ENCODE measurements at regions of chr2 and their contacts with region 1.

Region 1: GRCh38 chr2:217510771-217511291 is 492.0 kb downstream of the TNS1 start:
- DNase-seq: peak; percentile 58
- ATAC-seq: peak; percentile 93
- H3K4me3 Mint-ChIP-seq: peak overlapping the region; percentile 57
- H3K27ac Mint-ChIP-seq: no peak overlapping the region
- H3K4me1 Mint-ChIP-seq: peaks cover 15% of the 10 kb centered on the region
- H3K27me3 Mint-ChIP-seq: peaks cover 3% of the 10 kb centered on the region
- CTCF ChIP-seq: peak; percentile 55

Region 2: DNA sequence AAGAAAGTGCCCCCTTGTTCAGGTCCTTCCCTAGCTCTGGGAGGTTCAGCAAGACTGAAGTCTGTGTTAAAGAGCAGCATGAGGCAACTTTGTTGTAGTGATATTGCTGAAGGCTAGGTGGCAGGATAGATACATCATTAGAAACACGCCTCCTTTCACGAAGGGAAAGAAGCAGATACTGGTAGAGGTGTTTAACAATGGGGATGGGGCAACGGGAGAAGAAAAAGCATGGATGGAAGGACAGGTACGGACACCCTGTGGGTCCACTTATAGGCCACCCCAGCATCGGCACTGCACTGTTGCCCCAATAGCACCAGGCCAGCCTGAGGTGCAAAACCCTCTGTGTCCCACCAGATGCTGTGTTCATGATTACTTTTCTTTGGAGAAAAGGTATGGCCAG is 811.9 kb before region 1 on chr2:
- CTCF ChIA-PET with region 1: interaction called, 16 read pairs
- POLR2A ChIA-PET with region 1: interaction called, 8 read pairs
- DNase-seq: no peak
- ATAC-seq: peak; percentile 43
- H3K4me3 Mint-ChIP-seq: no peak overlapping the region
- H3K27ac Mint-ChIP-seq: no peak overlapping the region
- H3K4me1 Mint-ChIP-seq: peaks cover 21% of the 10 kb centered on the region
- H3K27me3 Mint-ChIP-seq: peaks cover 23% of the 10 kb centered on the region
- CTCF ChIP-seq: peak; percentile 40; the same call in 1 of the 2 replicates

Region 3: GRCh38 chr2:217269701-217270484 is 240.9 kb before region 1 on chr2:
- CTCF ChIA-PET with region 1: interaction called, 11 read pairs
- POLR2A ChIA-PET with region 1: no interaction called
- DNase-seq: peak; percentile 85
- ATAC-seq: peak; percentile 98
- H3K4me3 Mint-ChIP-seq: no peak overlapping the region
- H3K27ac Mint-ChIP-seq: no peak overlapping the region
- H3K4me1 Mint-ChIP-seq: peaks cover 18% of the 10 kb centered on the region
- H3K27me3 Mint-ChIP-seq: peaks cover 100% of the 10 kb centered on the region
- CTCF ChIP-seq: no peak

Region 4: GRCh38 chr2:217650716-217651360 is 140.0 kb after region 1 on chr2:
- CTCF ChIA-PET with region 1: interaction called, 28 read pairs
- POLR2A ChIA-PET with region 1: no interaction called
- DNase-seq: peak; percentile 46
- ATAC-seq: peak; percentile 95
- H3K4me3 Mint-ChIP-seq: no peak overlapping the region
- H3K27ac Mint-ChIP-seq: no peak overlapping the region
- H3K4me1 Mint-ChIP-seq: peaks cover 26% of the 10 kb centered on the region
- H3K27me3 Mint-ChIP-seq: no peaks in the 10 kb centered on the region
- CTCF ChIP-seq: peak; percentile 20; the same call in 1 of the 2 replicates

Region 5: DNA sequence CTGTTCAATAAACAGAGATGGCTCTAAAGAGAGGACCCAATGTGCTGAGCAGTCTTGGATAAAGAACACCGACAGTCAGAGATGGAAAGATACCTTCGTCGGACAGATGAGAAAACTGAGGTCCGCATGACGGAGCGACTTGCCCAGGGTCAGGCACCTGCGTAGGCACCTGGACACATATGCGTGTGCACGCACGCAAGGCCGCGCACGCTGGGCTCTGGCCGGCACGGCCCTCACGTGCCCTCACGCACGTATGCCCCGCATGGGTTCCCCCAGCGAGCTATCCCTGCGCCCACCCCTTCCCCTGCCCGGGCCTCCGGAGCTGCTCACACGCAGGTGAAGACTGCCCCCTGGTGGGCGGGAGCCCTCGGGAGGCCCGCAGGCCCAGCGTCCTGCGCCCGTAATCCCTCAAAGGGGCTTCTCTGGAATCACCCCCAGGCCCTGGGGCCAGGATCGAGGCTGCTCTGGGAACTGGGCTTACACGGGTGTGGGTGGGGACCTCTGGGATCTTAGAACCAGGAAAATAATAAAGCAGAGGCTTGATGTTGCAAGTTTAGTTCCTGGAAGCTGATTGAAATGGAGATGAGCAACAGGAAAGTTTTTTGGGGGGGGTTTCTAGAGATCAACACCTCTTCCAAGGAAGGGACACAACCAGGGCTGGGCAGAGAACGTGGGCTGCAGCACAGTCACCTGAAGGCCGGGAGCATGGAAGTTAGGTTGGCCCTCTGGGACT is 245.7 kb after region 1 on chr2:
- CTCF ChIA-PET with region 1: interaction called, 16 read pairs
- POLR2A ChIA-PET with region 1: no interaction called
- DNase-seq: peak; percentile 93
- ATAC-seq: peak; percentile 97
- H3K4me3 Mint-ChIP-seq: peak overlapping the region; percentile 44
- H3K27ac Mint-ChIP-seq: no peak overlapping the region
- H3K4me1 Mint-ChIP-seq: peaks cover 20% of the 10 kb centered on the region
- H3K27me3 Mint-ChIP-seq: peaks cover 17% of the 10 kb centered on the region
- CTCF ChIP-seq: peak; percentile 89

Region 6: GRCh38 chr2:217918308-217919024 is 407.6 kb after region 1 on chr2:
- CTCF ChIA-PET with region 1: no interaction called
- POLR2A ChIA-PET with region 1: no interaction called
- DNase-seq: peak; percentile 60
- ATAC-seq: peak; percentile 67
- H3K4me3 Mint-ChIP-seq: no peak overlapping the region
- H3K27ac Mint-ChIP-seq: no peak overlapping the region
- H3K4me1 Mint-ChIP-seq: peaks cover 55% of the 10 kb centered on the region
- H3K27me3 Mint-ChIP-seq: no peaks in the 10 kb centered on the region
- CTCF ChIP-seq: no peak